ENCODE measurements at regions of chr17 and their contacts with region 1.

Region 1: DNA sequence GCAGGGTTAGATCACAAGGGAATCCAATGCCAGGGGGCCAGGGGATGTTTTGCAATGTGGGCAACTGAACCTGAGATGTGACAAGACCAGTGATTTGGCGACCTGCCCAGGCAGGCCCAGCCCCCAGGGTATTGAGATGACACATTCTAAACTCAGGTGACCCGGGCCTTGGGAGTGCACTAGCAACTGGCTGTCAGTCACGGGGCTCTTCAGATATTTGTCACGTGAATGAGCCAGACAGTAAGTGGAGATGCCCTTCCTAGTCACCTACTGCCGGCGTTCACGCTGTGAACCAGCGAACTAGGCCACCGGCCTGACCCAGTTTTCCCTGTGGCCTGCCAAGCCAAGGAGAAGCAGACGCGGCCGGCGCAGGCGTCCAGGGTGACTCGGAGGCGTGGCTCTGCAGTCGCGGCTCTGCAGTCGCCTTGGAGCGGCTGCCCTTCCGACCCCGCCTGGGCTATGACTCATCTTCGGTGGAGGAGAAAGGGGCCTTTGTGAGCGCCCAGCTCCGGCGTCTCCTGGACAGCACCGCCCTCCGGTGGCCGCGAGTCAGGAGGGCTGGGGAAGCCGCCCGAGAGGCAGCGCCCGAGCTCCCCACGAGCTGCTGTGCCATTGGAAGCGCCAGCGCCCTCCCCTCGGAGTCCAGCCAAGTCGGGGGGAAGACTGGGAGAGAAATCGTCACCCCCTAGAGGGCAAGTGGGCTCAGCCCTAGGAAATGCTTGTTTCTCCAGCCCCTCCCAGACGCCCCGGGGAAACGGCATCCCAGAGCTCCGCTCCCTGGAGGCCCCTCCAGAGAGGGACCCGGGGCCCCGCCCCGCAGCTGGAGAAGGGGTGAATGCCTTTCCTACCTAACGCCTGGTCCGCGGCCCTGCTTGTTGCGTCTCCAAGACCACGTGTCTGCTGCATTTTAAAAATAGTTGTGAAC is 38.8 kb downstream of the WSB1 start:
- DNase-seq: peak; percentile 98
- H3K4me3 ChIP-seq: peak overlapping the region; percentile 58 to 63 (median 60)
- H3K27ac ChIP-seq: peak overlapping the region; percentile 90 to 94 (median 92)
- H3K4me1 ChIP-seq: peaks cover 21 to 37% (median 33%) of the 10 kb centered on the region in 4 donors
- H3K27me3 ChIP-seq: no peaks in the 10 kb centered on the region
- CTCF ChIP-seq: peak; percentile 91 to 95 (median 92)
- EP300 ChIP-seq: no peak
- POLR2A ChIP-seq: no peak

Region 2: GRCh38 chr17:27236717-27237315 is 95.9 kb before region 1 on chr17:
- intact Hi-C with region 1: loop called (anchors 2 kb)
- DNase-seq: no peak
- H3K4me3 ChIP-seq: no peak overlapping the region
- H3K27ac ChIP-seq: no peak overlapping the region
- H3K4me1 ChIP-seq: peaks cover 0 to 33% (median 11%) of the 10 kb centered on the region in 4 donors
- H3K27me3 ChIP-seq: no peaks in the 10 kb centered on the region
- CTCF ChIP-seq: peak; percentile 91 to 95 (median 94)
- EP300 ChIP-seq: no peak
- POLR2A ChIP-seq: no peak

Region 3: DNA sequence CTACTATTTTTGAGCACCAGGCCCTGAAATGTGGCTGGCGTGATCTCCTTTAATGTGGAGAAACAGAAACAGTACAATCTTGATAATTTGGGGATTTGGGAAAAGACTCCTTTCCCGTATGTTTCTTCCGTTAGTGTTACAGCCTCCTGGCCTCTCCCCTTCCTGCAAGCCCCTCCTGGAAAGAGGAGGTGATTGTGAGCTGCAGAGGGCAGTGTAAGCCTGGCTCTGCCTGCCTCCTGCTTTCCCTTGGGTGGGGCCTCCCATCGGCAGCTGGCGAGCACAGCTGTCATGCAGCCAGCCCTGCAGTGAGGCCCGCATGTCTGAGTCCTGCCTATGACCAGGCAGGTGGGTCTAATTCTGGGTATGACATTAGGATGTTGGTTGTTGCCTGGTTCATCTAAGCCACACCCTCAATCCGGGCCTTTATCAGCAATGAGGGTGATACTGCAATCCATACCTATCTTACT is 87.5 kb before region 1 on chr17:
- intact Hi-C with region 1: loop called (anchors 2 kb)
- DNase-seq: peak; percentile 93
- H3K4me3 ChIP-seq: peak overlapping the region; percentile 24 to 37 (median 34)
- H3K27ac ChIP-seq: peak overlapping the region; percentile 84 to 91 (median 88)
- H3K4me1 ChIP-seq: peaks cover 44 to 79% (median 66%) of the 10 kb centered on the region in 4 donors
- H3K27me3 ChIP-seq: no peaks in the 10 kb centered on the region
- CTCF ChIP-seq: peak; percentile 62 to 72 (median 71)
- EP300 ChIP-seq: no peak
- POLR2A ChIP-seq: no peak

Region 4: DNA sequence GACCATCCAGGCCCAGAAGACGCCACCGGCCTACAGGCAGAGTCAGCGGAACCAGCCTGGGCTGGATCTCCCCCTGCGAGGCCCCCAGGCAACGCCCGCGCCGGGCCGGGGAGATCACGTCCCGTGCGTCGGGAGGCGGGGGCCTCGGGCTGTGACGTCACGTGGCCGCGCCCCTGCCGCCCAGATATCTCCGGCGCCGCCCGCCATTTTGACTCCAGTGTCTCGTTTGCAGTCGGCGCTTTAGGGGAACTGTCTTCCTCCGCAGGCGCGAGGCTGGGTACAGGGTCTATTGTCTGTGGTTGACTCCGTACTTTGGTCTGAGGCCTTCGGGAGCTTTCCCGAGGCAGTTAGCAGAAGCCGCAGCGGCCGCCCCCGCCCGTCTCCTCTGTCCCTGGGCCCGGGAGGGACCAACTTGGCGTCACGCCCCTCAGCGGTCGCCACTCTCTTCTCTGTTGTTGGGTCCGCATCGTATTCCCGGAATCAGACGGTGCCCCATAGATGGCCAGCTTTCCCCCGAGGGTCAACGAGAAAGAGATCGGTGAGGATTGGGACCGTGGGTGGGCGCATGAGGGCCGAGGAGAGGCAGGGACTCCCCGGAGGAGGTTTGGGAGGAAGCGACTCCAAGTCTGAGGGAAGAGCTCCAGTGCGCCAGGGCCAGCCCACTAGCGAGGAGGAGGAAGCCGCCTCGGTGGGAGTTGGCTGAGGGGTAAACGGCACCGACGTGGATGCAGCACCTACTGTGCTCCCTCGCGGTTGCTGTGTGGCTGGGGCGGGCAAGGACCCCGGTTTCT is 38.7 kb before region 1 on chr17 and contains the start of gene WSB1:
- intact Hi-C with region 1: loop called (anchors 2 kb)
- DNase-seq: peak; percentile 98
- H3K4me3 ChIP-seq: peak within 1 kb of the TSS; percentile 85 to 98 (median 90)
- H3K27ac ChIP-seq: peak within 1 kb of the TSS; percentile 99 to 100 (median 100)
- H3K4me1 ChIP-seq: peaks cover 28 to 41% (median 35%) of the 10 kb centered on the region in 4 donors
- H3K27me3 ChIP-seq: no peaks in the 10 kb centered on the region
- CTCF ChIP-seq: no peak
- EP300 ChIP-seq: peak; percentile 11
- POLR2A ChIP-seq: peak; percentile 95
- total RNA-seq, gene WSB1: 84.1 to 125 (median 118) TPM

Region 5: DNA sequence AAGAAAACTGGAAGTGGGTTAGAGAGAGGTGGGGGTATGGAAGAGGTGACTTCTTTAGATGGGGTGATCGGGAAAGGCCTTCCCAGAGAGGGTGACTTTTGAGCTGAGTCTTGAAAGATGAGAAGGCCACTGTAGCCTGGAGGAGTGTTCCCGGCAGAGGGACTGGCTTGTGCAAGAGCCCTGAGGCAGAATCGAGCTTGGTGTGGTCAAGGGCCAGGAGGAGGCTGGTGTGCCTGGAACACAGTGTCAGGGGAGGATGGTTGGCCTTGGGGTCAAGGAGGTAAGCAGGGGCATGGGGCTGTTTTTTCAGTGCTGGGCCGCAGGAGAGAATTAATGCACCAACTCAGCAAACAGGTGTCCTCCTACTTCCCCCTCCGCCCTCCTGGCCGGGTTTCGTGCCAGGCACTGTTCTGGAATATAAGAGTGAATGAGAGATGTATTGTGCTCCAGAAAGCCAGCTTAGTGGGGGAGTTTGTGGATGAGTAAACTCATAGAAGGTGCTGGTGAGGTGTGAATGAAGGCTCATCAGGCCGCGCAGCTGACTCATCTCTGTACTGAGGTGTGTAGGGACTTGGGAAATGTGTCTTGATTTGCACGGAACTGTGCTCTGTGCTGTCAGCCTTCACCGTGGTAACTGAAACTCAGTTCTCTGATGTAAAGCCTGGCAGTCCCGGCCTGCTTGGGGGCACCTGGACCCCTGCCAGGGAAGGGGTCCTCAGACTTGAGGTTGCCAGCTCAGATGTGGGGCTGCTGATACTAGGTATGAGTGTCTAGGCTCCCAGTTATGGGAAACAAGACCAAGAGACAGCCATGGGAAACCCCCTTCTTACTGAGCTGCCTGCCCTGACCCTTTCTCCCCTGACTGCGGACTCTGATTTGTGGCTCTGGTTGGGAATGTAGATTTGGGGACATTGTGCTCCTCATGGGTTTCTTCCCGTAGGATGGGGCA is 138.8 kb after region 1 on chr17:
- intact Hi-C with region 1: no loop called
- DNase-seq: no peak
- H3K4me3 ChIP-seq: no peak overlapping the region
- H3K27ac ChIP-seq: no peak overlapping the region
- H3K4me1 ChIP-seq: peaks cover 28 to 36% (median 33%) of the 10 kb centered on the region in 4 donors
- H3K27me3 ChIP-seq: no peaks in the 10 kb centered on the region
- CTCF ChIP-seq: no peak
- EP300 ChIP-seq: no peak
- POLR2A ChIP-seq: no peak

Measured in esophagus muscularis mucosa (tissue), 4 donors.